ENCODE measurements at regions of chr15 and their contacts with region 1.

Region 1: GRCh38 chr15:67863442-67863987 is 23.7 kb upstream of the RNU6-1 start:
- DNase-seq: peak; percentile 73 to 85
- ATAC-seq: peak; percentile 99

Region 2: GRCh38 chr15:67792250-67792942 is 71.1 kb before region 1 on chr15:
- intact Hi-C with region 1: no loop called
- DNase-seq: no peak
- ATAC-seq: no peak

Region 3: GRCh38 chr15:68053701-68054627 is 190.4 kb after region 1 on chr15 and contains the start of gene PIAS1:
- intact Hi-C with region 1: loop called in 1 of 2 experiments (anchors 10 kb)
- DNase-seq: peak; percentile 94 to 96
- ATAC-seq: peak; percentile 95
- total RNA-seq, gene PIAS1: 33.9 to 35.5 TPM

Region 4: DNA sequence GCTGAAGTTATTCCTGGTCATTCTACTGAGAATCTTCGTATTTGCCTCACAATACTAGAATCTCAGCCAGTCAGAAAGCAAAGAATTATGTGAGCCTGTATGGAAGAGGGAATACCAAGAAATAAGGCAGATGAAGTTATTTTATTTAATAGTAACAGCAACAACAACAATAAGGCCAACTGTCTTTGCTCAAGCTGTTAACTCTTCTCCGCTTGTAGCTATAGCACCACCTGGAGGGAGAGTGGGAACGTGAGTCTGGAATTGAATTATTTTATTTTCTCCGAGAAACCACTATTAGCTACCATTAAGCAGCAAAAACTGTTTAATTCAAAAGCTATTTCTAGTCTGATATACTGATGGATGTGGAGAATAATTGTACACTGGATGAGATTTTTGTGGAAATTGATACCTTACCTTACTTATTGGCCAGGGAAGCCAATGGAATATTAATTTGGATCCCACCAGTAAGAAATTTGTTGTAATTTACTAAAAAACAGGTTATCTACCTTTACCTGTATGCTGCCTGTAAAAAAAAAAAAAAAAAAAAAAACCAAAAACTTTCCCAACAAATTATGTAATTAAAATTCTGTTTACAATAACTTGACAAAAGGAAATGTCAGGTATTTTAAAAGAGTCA is 291.5 kb after region 1 on chr15:
- intact Hi-C with region 1: loop called in 1 of 2 experiments (anchors 5 kb)
- DNase-seq: peak in 1 of 2 donors; percentile 39
- ATAC-seq: peak; percentile 75

Region 5: GRCh38 chr15:68210821-68211655 is 347.5 kb after region 1 on chr15:
- intact Hi-C with region 1: loop called in 1 of 2 experiments (anchors 10 kb)
- DNase-seq: peak; percentile 58 to 78
- ATAC-seq: peak; percentile 38

Measured in left colon (tissue), 2 donors.